Naive thymus-derived CD8-positive, alpha-beta T cell (primary cell): ENCODE measurements at regions of chr1 and their contacts with region 1.

Region 1: GRCh38 chr1:234772345-234773147 is 162.6 kb upstream of the IRF2BP2 start:
- DNase-seq: peak; percentile 31 to 93 (median 77)
- ATAC-seq: peak; percentile 79 to 87
- H3K4me3 Mint-ChIP-seq: peak overlapping the region; percentile 62 to 83 (median 74)
- H3K27ac Mint-ChIP-seq: peak overlapping the region; percentile 87 to 98 (median 95)
- H3K4me1 Mint-ChIP-seq: peaks cover 38 to 57% (median 56%) of the 10 kb centered on the region in 4 donors
- H3K27me3 Mint-ChIP-seq: no peaks in the 10 kb centered on the region

Region 2: GRCh38 chr1:234659538-234659937 is 113.0 kb before region 1 on chr1:
- POLR2A ChIA-PET with region 1: no interaction called
- DNase-seq: no peak
- ATAC-seq: no peak
- H3K4me3 Mint-ChIP-seq: no peak overlapping the region
- H3K27ac Mint-ChIP-seq: no peak overlapping the region
- H3K4me1 Mint-ChIP-seq: peaks cover 0 to 14% (median 6%) of the 10 kb centered on the region in 4 donors
- H3K27me3 Mint-ChIP-seq: no peaks in the 10 kb centered on the region

Region 3: GRCh38 chr1:234758851-234759250 is 13.7 kb before region 1 on chr1:
- POLR2A ChIA-PET with region 1: interaction called, 17 read pairs
- DNase-seq: peak in 9 of 10 donors; percentile 31 to 90 (median 72)
- ATAC-seq: peak; percentile 84 to 91
- H3K4me3 Mint-ChIP-seq: peak overlapping the region; percentile 19 to 91 (median 70)
- H3K27ac Mint-ChIP-seq: peak overlapping the region; percentile 81 to 99 (median 98)
- H3K4me1 Mint-ChIP-seq: peaks cover 18 to 52% (median 49%) of the 10 kb centered on the region in 4 donors
- H3K27me3 Mint-ChIP-seq: no peaks in the 10 kb centered on the region

Region 4: DNA sequence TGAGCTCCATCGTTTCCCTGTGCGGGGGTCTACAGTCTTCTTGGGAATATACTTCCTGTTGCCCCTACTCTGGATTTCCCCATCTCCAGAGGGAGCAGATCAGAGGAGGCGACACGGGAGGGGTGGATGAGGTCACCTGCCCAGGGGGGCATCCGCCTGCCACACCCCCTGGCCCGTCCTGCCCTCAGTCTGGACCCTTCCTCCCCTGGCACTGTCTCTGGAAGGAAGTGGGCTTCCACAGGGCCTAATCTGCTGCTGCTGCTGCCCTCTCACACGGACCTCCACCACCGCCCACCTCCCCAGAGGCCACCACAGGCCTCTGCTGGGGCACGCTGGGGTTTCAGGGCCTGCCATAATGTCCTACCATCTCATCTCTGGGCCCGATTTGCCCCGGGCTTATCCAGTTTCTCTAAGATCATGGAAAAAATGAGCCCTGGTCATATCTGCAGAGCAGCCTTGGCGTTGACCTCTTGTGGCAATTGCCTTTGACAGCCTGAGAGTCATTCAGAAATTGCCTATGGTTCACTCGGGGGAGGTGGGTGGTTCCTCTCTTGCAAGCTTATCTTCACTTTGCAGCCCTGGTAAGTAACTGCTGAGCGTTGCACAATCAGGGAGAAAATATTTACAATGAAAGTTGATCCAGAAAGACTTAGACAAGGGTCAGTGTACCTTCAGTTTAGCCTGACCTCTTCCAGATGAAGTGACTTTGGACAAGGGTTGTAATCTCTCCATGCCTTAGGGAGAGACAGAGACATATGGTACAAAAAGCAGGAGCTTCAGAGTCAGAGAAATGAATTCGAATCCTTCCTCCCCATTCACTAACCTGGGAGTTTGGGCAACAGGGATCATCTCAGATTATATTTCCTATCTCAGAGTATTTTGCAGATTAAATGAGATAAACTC is 103.7 kb after region 1 on chr1:
- POLR2A ChIA-PET with region 1: no interaction called
- DNase-seq: no peak
- ATAC-seq: no peak
- H3K4me3 Mint-ChIP-seq: no peak overlapping the region
- H3K27ac Mint-ChIP-seq: peak overlapping the region in 2 of 10 donors; percentile 23 to 66
- H3K4me1 Mint-ChIP-seq: peaks cover 3 to 21% (median 8%) of the 10 kb centered on the region in 4 donors
- H3K27me3 Mint-ChIP-seq: no peaks in the 10 kb centered on the region